ENCODE measurements at regions of chr4 and their contacts with region 1.

Region 1: DNA sequence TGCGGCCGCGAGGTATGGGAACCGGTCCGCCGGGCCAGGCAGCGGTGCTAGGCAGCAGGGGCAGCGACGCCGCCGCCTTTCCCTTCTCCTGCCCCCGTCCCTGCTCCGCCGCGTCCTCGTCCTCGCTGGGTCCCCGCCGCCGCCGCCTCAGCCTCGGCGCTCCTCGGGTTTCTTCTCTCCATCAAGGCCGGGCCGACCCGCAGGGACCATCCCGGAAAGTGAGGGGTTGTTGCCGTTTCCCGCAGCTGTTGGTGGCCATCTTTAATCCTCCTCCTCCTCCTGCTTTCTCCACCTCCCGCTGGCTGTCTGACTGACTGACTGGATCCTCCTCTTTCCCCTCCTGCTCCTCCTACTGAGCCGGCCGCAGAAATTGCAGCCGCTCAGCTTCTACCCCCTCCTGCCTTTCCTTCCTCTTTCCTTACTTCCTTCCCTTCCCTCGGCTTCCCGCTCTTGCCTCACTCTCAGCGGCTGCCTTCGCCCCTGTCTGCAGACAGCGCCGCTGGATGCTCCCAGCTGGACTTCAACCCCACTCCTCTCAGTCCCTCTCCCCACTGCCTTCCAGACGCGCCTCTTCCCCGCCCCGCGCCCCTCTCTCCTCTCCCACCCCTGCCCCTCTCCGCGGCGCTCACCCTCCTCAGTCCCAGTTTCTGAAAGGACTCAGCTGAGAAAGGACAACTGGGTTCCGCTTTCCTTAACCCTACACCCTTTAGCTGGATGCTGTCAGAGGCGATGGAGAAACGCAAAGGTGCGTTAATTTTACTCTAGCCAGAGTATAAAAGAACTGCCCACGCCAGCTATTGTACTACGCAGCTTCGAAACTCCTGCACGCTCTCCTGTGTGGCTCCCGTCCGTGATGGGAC is at the start of gene WDFY3:
- DNase-seq: peak; percentile 78 to 90
- ATAC-seq: peak; percentile 93 to 97 (median 96)
- H3K4me3 ChIP-seq: peak within 1 kb of the TSS; percentile 66 to 93 (median 84)
- H3K27ac ChIP-seq: peak within 1 kb of the TSS; percentile 72 to 96 (median 92)
- H3K4me1 ChIP-seq: peaks cover 0 to 54% (median 32%) of the 10 kb centered on the region in 9 donors
- H3K27me3 ChIP-seq: no peaks in the 10 kb centered on the region
- CTCF ChIP-seq: peak in 3 of 9 donors; percentile 27 to 45 (median 30)
- total RNA-seq, gene WDFY3: 35.2 to 68.9 (median 53.0) TPM

Region 2: GRCh38 chr4:84582302-84583000 is 384.2 kb before region 1 on chr4:
- intact Hi-C with region 1: loop called in 2 of 10 experiments (anchors 10 kb)
- DNase-seq: peak; percentile 74 to 83
- ATAC-seq: peak; percentile 89 to 96 (median 94)
- H3K4me3 ChIP-seq: peak overlapping the region; percentile 68 to 95 (median 76)
- H3K27ac ChIP-seq: peak overlapping the region in 8 of 10 donors; percentile 11 to 78 (median 46)
- H3K4me1 ChIP-seq: peaks cover 0 to 19% (median 14%) of the 10 kb centered on the region in 9 donors
- H3K27me3 ChIP-seq: peaks cover 0 to 73% (median 29%) of the 10 kb centered on the region in 7 donors
- CTCF ChIP-seq: no peak

Region 3: GRCh38 chr4:84740057-84740456 is 226.6 kb before region 1 on chr4:
- intact Hi-C with region 1: loop called in 1 of 10 experiments (anchors 10 kb)
- DNase-seq: no peak
- ATAC-seq: no peak
- H3K4me3 ChIP-seq: no peak overlapping the region
- H3K27ac ChIP-seq: no peak overlapping the region
- H3K4me1 ChIP-seq: no peaks in the 10 kb centered on the region
- H3K27me3 ChIP-seq: no peaks in the 10 kb centered on the region
- CTCF ChIP-seq: no peak

Region 4: DNA sequence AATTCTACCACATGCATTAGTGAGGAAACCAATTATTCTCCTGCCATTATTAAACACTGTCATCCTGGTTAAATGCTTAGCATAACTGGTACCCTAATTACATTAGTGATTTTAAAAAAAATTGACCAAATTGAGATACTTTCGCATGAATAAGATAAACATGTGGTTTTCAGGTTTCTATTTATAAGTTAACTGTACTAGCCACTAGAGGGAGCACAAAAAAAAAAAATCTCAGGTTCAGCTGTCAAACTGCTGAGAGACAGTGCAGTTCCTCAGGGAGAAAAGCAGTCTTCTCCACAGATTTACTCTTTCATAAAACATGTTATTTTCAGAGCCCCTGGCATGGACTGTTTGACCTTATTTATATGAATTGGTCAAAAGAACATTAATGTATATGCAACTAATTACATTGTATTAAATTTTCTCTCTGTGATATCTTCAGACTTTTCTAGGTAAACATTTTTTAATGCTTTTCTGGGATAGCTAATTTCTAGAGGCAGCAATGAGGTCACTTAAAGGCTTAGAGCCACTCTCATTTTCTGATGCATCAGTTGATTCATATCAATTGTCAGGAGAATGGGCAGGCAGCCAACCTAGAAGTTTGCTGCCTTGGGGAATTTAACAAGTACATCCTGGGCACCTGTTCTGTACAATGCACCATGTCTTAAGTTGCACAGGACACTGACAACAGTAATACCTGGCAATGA is 216.2 kb before region 1 on chr4:
- intact Hi-C with region 1: loop called in 8 of 10 experiments (anchors 1 to 10 kb)
- DNase-seq: no peak
- ATAC-seq: peak; percentile 46 to 78 (median 62)
- H3K4me3 ChIP-seq: no peak overlapping the region
- H3K27ac ChIP-seq: no peak overlapping the region
- H3K4me1 ChIP-seq: peaks cover 0 to 33% (median 10%) of the 10 kb centered on the region in 9 donors
- H3K27me3 ChIP-seq: no peaks in the 10 kb centered on the region
- CTCF ChIP-seq: peak; percentile 31 to 81 (median 66)

Region 5: GRCh38 chr4:84809946-84810345 is 156.7 kb before region 1 on chr4:
- intact Hi-C with region 1: loop called in 1 of 10 experiments (anchors 5 kb)
- DNase-seq: no peak
- ATAC-seq: no peak
- H3K4me3 ChIP-seq: no peak overlapping the region
- H3K27ac ChIP-seq: no peak overlapping the region
- H3K4me1 ChIP-seq: no peaks in the 10 kb centered on the region
- H3K27me3 ChIP-seq: no peaks in the 10 kb centered on the region
- CTCF ChIP-seq: no peak

Region 6: GRCh38 chr4:84826681-84827080 is 139.9 kb before region 1 on chr4:
- intact Hi-C with region 1: loop called in 1 of 10 experiments (anchors 5 kb)
- DNase-seq: no peak
- ATAC-seq: no peak
- H3K4me3 ChIP-seq: no peak overlapping the region
- H3K27ac ChIP-seq: no peak overlapping the region
- H3K4me1 ChIP-seq: no peaks in the 10 kb centered on the region
- H3K27me3 ChIP-seq: no peaks in the 10 kb centered on the region
- CTCF ChIP-seq: no peak

Region 7: GRCh38 chr4:84841435-84841834 is 125.2 kb before region 1 on chr4:
- intact Hi-C with region 1: no loop called
- DNase-seq: no peak
- ATAC-seq: no peak
- H3K4me3 ChIP-seq: no peak overlapping the region
- H3K27ac ChIP-seq: no peak overlapping the region
- H3K4me1 ChIP-seq: peaks cover 0 to 6% (median 0%) of the 10 kb centered on the region in 9 donors
- H3K27me3 ChIP-seq: no peaks in the 10 kb centered on the region
- CTCF ChIP-seq: no peak

Region 8: DNA sequence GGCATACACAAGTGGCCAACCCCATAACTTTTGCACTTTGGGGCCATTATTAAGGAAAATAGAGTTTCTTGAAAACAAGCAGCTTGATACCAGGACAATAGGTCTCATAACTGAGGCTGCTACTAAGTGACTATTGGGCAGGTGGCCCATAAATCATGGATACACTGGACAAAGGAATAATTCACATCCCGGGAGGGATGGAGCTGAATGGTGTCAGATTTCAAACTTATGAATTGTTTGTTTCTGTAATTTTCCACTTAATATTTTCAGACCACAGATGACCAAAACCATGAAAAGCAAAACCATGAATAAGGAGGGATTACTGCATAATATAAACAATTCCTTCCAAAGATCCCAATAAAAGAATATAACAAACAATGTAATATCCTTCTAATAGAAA is 114.5 kb before region 1 on chr4:
- intact Hi-C with region 1: loop called in 1 of 10 experiments (anchors 10 kb)
- DNase-seq: no peak
- ATAC-seq: no peak
- H3K4me3 ChIP-seq: no peak overlapping the region
- H3K27ac ChIP-seq: no peak overlapping the region
- H3K4me1 ChIP-seq: peaks cover 0 to 40% (median 21%) of the 10 kb centered on the region in 9 donors
- H3K27me3 ChIP-seq: no peaks in the 10 kb centered on the region
- CTCF ChIP-seq: no peak

Measured in heart right ventricle (tissue), 16 donors.